GM12878 (cell line): ENCODE measurements at regions of chr17 and their contacts with region 1.

Region 1: DNA sequence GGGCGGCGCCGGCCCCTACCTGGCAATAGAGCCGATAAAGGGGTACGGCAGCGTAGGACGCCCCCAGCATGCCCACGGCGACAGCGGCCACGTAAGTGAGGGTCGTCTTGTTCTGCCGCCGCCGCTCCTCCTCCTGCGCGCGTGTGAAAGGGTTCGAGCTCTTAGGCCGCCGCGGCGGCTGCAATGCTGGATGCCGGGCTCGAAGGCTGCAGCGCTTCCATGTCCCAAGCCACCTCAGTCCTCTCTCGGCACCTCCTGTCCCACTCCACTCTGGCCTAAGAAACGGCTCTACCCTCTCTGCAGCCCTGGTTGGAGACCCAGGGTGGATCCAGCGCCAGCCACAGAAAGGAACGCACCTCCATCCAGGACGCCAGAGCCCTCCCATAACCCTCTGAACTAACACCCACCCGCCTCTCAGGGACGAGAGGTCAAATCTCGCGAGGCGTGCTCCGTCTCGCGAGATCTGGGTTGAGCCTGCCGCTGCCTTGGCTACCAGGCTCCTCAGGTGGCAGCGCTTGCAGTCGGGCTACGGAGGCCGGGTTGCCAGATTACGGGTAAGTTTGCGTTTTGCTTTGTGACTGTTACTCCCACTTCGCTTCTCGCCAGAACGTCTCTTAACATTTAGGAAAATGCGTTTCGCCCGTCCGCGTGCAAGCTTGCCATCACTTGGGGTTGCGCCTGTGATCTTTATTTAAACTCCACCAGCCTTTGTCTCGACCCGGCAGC is at the starts of genes COX11 and STXBP4:
- DNase-seq: peak; percentile 95
- ATAC-seq: peak; percentile 94
- H3K4me3 ChIP-seq: peak within 1 kb of the TSS; percentile 89
- H3K27ac ChIP-seq: peak within 1 kb of the TSS; percentile 85
- H3K4me1 ChIP-seq: peaks cover 8% of the 10 kb centered on the region; the same call in 1 of the 2 replicates
- H3K27me3 ChIP-seq: no peaks in the 10 kb centered on the region
- CTCF ChIP-seq: peak in 1 of 3 experiments; percentile 47; a peak in 3 of 6 replicates
- EP300 ChIP-seq: no peak
- POLR2A ChIP-seq: peak; percentile 94
- RAD21 ChIP-seq: no peak
- polyA plus RNA-seq, gene COX11: 13.8 to 21.5 TPM
- polyA plus RNA-seq, gene STXBP4: 4.8 to 5.5 TPM

Region 2: GRCh38 chr17:54903375-54903774 is 65.0 kb before region 1 on chr17:
- CTCF ChIA-PET with region 1: no interaction called
- POLR2A ChIA-PET with region 1: interaction called, 3 read pairs
- RAD21 ChIA-PET with region 1: no interaction called
- SMC1A ChIA-PET with region 1: no interaction called
- in situ Hi-C with region 1: no loop called
- intact Hi-C with region 1: loop called (anchors 2 kb)
- DNase-seq: no peak
- ATAC-seq: peak; percentile 54
- H3K4me3 ChIP-seq: no peak overlapping the region
- H3K27ac ChIP-seq: no peak overlapping the region
- H3K4me1 ChIP-seq: peaks cover 6% of the 10 kb centered on the region; the same call in 1 of the 2 replicates
- H3K27me3 ChIP-seq: no peaks in the 10 kb centered on the region; a peak in 1 of 4 replicates
- CTCF ChIP-seq: no peak
- EP300 ChIP-seq: no peak
- POLR2A ChIP-seq: no peak
- RAD21 ChIP-seq: no peak

Region 3: GRCh38 chr17:55996825-55997224 is 1028.4 kb after region 1 on chr17:
- CTCF ChIA-PET with region 1: no interaction called
- POLR2A ChIA-PET with region 1: no interaction called
- RAD21 ChIA-PET with region 1: no interaction called
- SMC1A ChIA-PET with region 1: no interaction called
- in situ Hi-C with region 1: no loop called
- intact Hi-C with region 1: no loop called
- DNase-seq: no peak
- ATAC-seq: no peak
- H3K4me3 ChIP-seq: no peak overlapping the region
- H3K27ac ChIP-seq: no peak overlapping the region
- H3K4me1 ChIP-seq: no peaks in the 10 kb centered on the region
- H3K27me3 ChIP-seq: no peaks in the 10 kb centered on the region
- CTCF ChIP-seq: no peak
- EP300 ChIP-seq: no peak
- POLR2A ChIP-seq: no peak
- RAD21 ChIP-seq: no peak